ENCODE measurements at regions of chr15 and their contacts with region 1.

Region 1: GRCh38 chr15:41230650-41231533 is at the starts of genes CHP1 and EXD1:
- DNase-seq: peak; percentile 97
- ATAC-seq: peak; percentile 97
- H3K4me3 ChIP-seq: peak within 1 kb of the TSS; percentile 80 to 94 (median 88)
- H3K4me3 Mint-ChIP-seq: peak within 1 kb of the TSS; percentile 95
- H3K27ac ChIP-seq: peak within 1 kb of the TSS; percentile 81 to 88
- H3K27ac Mint-ChIP-seq: peak within 1 kb of the TSS; percentile 95
- H3K4me1 ChIP-seq: peaks cover 18 to 24% of the 10 kb centered on the region in 2 donors
- H3K4me1 Mint-ChIP-seq: peaks cover 30% of the 10 kb centered on the region
- H3K27me3 ChIP-seq: no peaks in the 10 kb centered on the region
- H3K27me3 Mint-ChIP-seq: no peaks in the 10 kb centered on the region
- CTCF ChIP-seq: peak; percentile 95
- total RNA-seq, gene CHP1: 39.9 and 40.8 TPM in 2 replicates
- total RNA-seq, gene EXD1: not detected in 2 replicates

Region 2: GRCh38 chr15:40323239-40323952 is 907.5 kb before region 1 on chr15 and contains the start of gene INAFM2:
- CTCF ChIA-PET with region 1: interaction called, 3 read pairs
- POLR2A ChIA-PET with region 1: no interaction called
- intact Hi-C with region 1: loop called (anchors 2 kb)
- DNase-seq: peak; percentile 97
- ATAC-seq: peak; percentile 89
- H3K4me3 ChIP-seq: peak within 1 kb of the TSS; percentile 25 to 71 (median 59)
- H3K4me3 Mint-ChIP-seq: peak within 1 kb of the TSS; percentile 85
- H3K27ac ChIP-seq: peak within 1 kb of the TSS in 1 of 2 donors; percentile 10
- H3K27ac Mint-ChIP-seq: no peak within 1 kb of the TSS
- H3K4me1 ChIP-seq: peaks cover 21 to 26% of the 10 kb centered on the region in 2 donors
- H3K4me1 Mint-ChIP-seq: peaks cover 29% of the 10 kb centered on the region
- H3K27me3 ChIP-seq: peaks cover 0 to 2% (median 0%) of the 10 kb centered on the region in 4 experiments
- H3K27me3 Mint-ChIP-seq: no peaks in the 10 kb centered on the region
- CTCF ChIP-seq: peak; percentile 75
- total RNA-seq, gene INAFM2: 5.3 and 7.0 TPM in 2 replicates

Region 3: GRCh38 chr15:41203395-41203794 is 27.5 kb before region 1 on chr15:
- CTCF ChIA-PET with region 1: no interaction called
- POLR2A ChIA-PET with region 1: no interaction called
- intact Hi-C with region 1: no loop called
- DNase-seq: no peak
- ATAC-seq: no peak
- H3K4me3 ChIP-seq: no peak overlapping the region
- H3K4me3 Mint-ChIP-seq: no peak overlapping the region
- H3K27ac ChIP-seq: no peak overlapping the region
- H3K27ac Mint-ChIP-seq: no peak overlapping the region
- H3K4me1 ChIP-seq: no peaks in the 10 kb centered on the region
- H3K4me1 Mint-ChIP-seq: no peaks in the 10 kb centered on the region
- H3K27me3 ChIP-seq: no peaks in the 10 kb centered on the region
- H3K27me3 Mint-ChIP-seq: peaks cover 3% of the 10 kb centered on the region
- CTCF ChIP-seq: no peak

Region 4: GRCh38 chr15:41241221-41241964 is 10.5 kb after region 1 on chr15:
- CTCF ChIA-PET with region 1: no interaction called
- POLR2A ChIA-PET with region 1: no interaction called
- intact Hi-C with region 1: no loop called
- DNase-seq: no peak
- ATAC-seq: no peak
- H3K4me3 ChIP-seq: no peak overlapping the region
- H3K4me3 Mint-ChIP-seq: no peak overlapping the region
- H3K27ac ChIP-seq: no peak overlapping the region
- H3K27ac Mint-ChIP-seq: no peak overlapping the region
- H3K4me1 ChIP-seq: no peaks in the 10 kb centered on the region
- H3K4me1 Mint-ChIP-seq: no peaks in the 10 kb centered on the region
- H3K27me3 ChIP-seq: no peaks in the 10 kb centered on the region
- H3K27me3 Mint-ChIP-seq: no peaks in the 10 kb centered on the region
- CTCF ChIP-seq: no peak

Region 5: DNA sequence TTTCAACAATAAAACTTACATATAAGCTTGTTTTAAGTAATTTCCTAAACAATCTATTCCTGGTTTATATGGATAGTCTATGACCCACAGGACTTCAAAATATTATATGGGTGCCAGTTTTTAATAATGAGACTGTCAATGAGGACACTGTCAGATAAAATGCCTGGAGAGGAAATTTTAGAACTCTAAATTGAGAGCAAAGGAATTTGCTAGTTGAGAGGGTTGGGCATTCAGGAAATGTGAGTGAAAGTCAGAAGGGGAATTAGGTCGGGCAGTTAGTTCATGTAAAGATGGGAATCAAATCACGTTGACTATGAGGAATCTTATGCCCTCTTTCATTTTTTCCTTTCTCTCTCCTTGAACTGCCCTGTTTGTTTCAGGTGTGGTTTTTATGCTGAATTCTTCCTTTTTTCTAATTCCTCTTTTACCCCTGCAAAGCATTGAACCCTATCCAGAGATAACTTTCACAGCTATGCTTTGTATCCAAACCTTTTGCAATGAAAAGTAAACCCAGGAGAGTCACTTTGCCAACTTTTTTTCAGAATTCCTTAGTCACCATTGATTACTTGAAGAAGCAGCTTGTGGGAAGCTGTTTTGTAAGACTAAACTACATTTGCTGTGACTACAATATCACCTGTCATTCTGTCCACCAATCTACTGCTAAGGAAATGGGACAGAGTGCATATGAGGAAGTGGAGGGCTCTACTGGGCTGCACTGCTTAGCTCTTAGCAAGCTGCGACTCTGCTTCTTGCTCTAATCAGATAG is 28.0 kb after region 1 on chr15:
- CTCF ChIA-PET with region 1: interaction called, 4 read pairs
- POLR2A ChIA-PET with region 1: no interaction called
- intact Hi-C with region 1: loop called (anchors 1 kb)
- DNase-seq: peak; percentile 73
- ATAC-seq: peak; percentile 96
- H3K4me3 ChIP-seq: peak overlapping the region in 2 of 5 experiments; percentile 12 to 13
- H3K4me3 Mint-ChIP-seq: peak overlapping the region; percentile 40
- H3K27ac ChIP-seq: peak overlapping the region; percentile 26 to 59
- H3K27ac Mint-ChIP-seq: peak overlapping the region; percentile 33
- H3K4me1 ChIP-seq: peaks cover 23 to 36% of the 10 kb centered on the region in 2 donors
- H3K4me1 Mint-ChIP-seq: peaks cover 28% of the 10 kb centered on the region
- H3K27me3 ChIP-seq: no peaks in the 10 kb centered on the region
- H3K27me3 Mint-ChIP-seq: no peaks in the 10 kb centered on the region
- CTCF ChIP-seq: no peak

Region 6: DNA sequence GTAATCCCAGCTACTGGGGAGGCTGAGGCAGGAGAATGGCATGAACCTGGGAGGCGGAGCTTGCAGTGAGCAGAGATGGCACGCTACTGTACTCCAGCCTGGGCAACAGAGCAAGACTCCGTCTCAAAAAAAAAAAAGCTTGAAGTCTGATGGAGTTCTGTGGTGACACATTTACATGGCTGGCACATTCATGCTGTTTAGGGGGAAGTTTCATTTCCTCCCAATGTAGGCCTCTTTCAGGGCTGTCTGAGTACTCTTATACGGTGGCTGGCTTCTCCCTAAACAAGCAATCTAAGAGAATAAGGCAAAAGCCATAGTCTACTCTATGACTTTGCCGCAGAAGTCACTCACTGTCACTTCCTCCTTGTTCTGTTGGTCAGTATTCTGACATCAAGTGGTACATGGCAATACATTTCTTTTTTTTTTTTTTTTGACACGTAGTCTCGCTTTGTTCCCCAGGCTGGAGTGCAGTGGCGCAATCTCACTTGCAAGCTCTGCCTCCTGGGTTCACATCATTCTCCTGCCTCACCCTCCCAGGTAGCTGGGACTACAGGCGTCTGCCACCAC is 60.3 kb after region 1 on chr15:
- CTCF ChIA-PET with region 1: interaction called, 6 read pairs
- POLR2A ChIA-PET with region 1: interaction called, 9 read pairs
- intact Hi-C with region 1: loop called (anchors 1 kb)
- DNase-seq: peak; percentile 89
- ATAC-seq: peak; percentile 95
- H3K4me3 ChIP-seq: peak overlapping the region in 1 of 5 experiments; percentile 12
- H3K4me3 Mint-ChIP-seq: peak overlapping the region; percentile 68
- H3K27ac ChIP-seq: peak overlapping the region; percentile 73 to 91
- H3K27ac Mint-ChIP-seq: peak overlapping the region; percentile 93
- H3K4me1 ChIP-seq: peaks cover 24 to 35% of the 10 kb centered on the region in 2 donors
- H3K4me1 Mint-ChIP-seq: peaks cover 45% of the 10 kb centered on the region
- H3K27me3 ChIP-seq: no peaks in the 10 kb centered on the region
- H3K27me3 Mint-ChIP-seq: no peaks in the 10 kb centered on the region
- CTCF ChIP-seq: no peak

Region 7: DNA sequence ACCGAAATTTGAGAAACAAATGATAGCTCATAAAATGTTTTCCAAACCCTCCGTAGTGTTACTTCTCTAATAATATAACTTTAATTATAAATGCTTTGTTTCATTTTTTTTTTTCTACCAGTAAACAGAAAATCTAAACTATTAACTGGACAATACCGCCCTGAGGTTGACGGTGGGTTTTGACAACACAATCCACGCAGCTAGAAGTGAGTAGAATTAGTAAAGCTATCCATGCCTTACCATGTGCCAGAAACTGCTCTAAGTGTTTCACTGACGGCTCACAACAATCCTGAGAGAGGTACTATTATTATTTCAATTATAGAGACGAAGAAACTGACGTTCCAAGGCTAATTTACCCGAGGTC is 171.0 kb after region 1 on chr15:
- CTCF ChIA-PET with region 1: no interaction called
- POLR2A ChIA-PET with region 1: interaction called, 5 read pairs
- intact Hi-C with region 1: loop called (anchors 1 kb)
- DNase-seq: no peak
- ATAC-seq: peak; percentile 8
- H3K4me3 ChIP-seq: peak overlapping the region; percentile 76 to 97 (median 86)
- H3K4me3 Mint-ChIP-seq: peak overlapping the region; percentile 98
- H3K27ac ChIP-seq: peak overlapping the region; percentile 71 to 91
- H3K27ac Mint-ChIP-seq: peak overlapping the region; percentile 99
- H3K4me1 ChIP-seq: peaks cover 8 to 17% of the 10 kb centered on the region in 2 donors
- H3K4me1 Mint-ChIP-seq: peaks cover 21% of the 10 kb centered on the region
- H3K27me3 ChIP-seq: no peaks in the 10 kb centered on the region
- H3K27me3 Mint-ChIP-seq: no peaks in the 10 kb centered on the region
- CTCF ChIP-seq: no peak

Region 8: DNA sequence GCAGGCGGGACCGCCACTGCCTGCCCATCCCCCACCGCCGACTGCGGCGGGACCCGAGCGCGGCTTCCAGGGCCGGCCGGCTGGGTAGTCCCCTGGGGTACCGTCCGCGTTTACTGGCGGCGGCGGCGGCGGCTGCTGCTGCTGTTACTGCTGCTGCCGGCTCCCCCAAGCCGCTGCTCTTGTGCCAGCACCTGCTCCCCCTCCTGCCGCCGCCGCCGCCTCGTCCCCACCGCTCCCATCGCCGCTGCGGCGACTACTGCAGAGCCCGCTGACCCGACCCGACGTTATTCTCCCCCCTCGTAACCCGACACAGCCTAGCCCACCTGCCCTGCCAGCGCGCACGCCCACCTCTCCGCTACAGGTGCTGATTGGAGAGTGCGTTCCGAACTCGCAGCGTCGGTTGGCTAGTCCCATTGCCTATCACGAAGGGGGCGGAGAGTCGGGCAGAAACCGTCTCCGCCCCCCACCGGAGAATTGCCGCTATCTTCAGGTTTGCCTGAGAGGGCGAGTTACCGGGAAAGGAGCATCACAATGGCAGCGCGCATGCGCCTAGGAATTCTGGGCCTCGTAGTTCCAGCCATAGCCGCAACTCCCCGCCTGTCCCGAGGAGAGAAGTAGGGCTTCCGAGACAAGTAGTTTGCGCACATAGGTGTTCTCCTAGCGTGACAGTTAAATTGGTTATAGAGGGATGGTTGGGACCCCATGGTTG is 1689.8 kb after region 1 on chr15 and contains the start of gene TTBK2:
- CTCF ChIA-PET with region 1: no interaction called
- POLR2A ChIA-PET with region 1: no interaction called
- intact Hi-C with region 1: loop called (anchors 5 kb)
- DNase-seq: peak; percentile 99
- ATAC-seq: peak; percentile 95
- H3K4me3 ChIP-seq: peak within 1 kb of the TSS; percentile 67 to 94 (median 73)
- H3K4me3 Mint-ChIP-seq: peak within 1 kb of the TSS; percentile 90
- H3K27ac ChIP-seq: peak within 1 kb of the TSS; percentile 41 to 46
- H3K27ac Mint-ChIP-seq: peak within 1 kb of the TSS; percentile 92
- H3K4me1 ChIP-seq: peaks cover 12 to 23% of the 10 kb centered on the region in 2 donors
- H3K4me1 Mint-ChIP-seq: peaks cover 34% of the 10 kb centered on the region
- H3K27me3 ChIP-seq: no peaks in the 10 kb centered on the region
- H3K27me3 Mint-ChIP-seq: no peaks in the 10 kb centered on the region
- CTCF ChIP-seq: peak; percentile 16
- total RNA-seq, gene TTBK2: 38.7 and 39.6 TPM in 2 replicates